Common myeloid progenitor, CD34-positive (primary cell): ENCODE measurements at regions of chr1 and their contacts with region 1.

Region 1: GRCh38 chr1:40078512-40079333 is 18.3 kb downstream of the PPT1 start:
- DNase-seq: peak; percentile 51 to 68 (median 61)
- H3K4me3 ChIP-seq: no peak overlapping the region
- H3K27ac ChIP-seq: no peak overlapping the region
- H3K4me1 ChIP-seq: peaks cover 0 to 15% (median 7%) of the 10 kb centered on the region in 4 experiments
- H3K27me3 ChIP-seq: no peaks in the 10 kb centered on the region

Region 2: GRCh38 chr1:39954816-39955546 is 123.7 kb before region 1 on chr1 and contains the start of gene MFSD2A:
- CTCF ChIA-PET with region 1: no interaction called
- POLR2A ChIA-PET with region 1: no interaction called
- DNase-seq: peak; percentile 81 to 90 (median 89)
- H3K4me3 ChIP-seq: peak within 1 kb of the TSS; percentile 29 to 79 (median 62)
- H3K27ac ChIP-seq: no peak within 1 kb of the TSS
- H3K4me1 ChIP-seq: peaks cover 2 to 43% (median 23%) of the 10 kb centered on the region in 4 experiments
- H3K27me3 ChIP-seq: peaks cover 0 to 5% (median 0%) of the 10 kb centered on the region in 5 experiments

Region 3: GRCh38 chr1:40094466-40095110 is 15.9 kb after region 1 on chr1:
- CTCF ChIA-PET with region 1: interaction called, 14 read pairs
- POLR2A ChIA-PET with region 1: no interaction called
- DNase-seq: no peak
- H3K4me3 ChIP-seq: no peak overlapping the region
- H3K27ac ChIP-seq: no peak overlapping the region
- H3K4me1 ChIP-seq: peaks cover 5 to 39% (median 12%) of the 10 kb centered on the region in 4 experiments
- H3K27me3 ChIP-seq: no peaks in the 10 kb centered on the region

Region 4: DNA sequence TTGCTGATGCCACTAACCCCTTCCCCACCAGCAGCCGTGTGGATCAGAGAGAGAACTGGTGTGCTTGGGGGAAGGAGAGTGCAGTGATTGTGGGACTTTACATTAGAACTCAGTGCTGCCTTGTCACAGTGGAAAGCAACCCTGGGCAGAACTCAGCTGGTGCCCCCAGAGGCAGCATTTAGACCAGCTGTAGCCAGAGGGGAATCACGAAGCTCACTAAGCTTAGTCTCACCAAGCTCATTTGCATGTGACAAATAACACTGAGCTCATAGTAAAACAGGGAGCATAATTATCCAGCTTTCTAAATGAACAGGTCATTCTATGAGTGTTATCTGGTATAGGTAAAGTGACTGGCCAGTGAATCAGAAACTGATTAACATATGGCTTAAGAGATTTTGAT is 285.0 kb after region 1 on chr1:
- CTCF ChIA-PET with region 1: no interaction called
- POLR2A ChIA-PET with region 1: no interaction called
- DNase-seq: peak in 2 of 3 donors; percentile 52 to 62
- H3K4me3 ChIP-seq: no peak overlapping the region
- H3K27ac ChIP-seq: no peak overlapping the region
- H3K4me1 ChIP-seq: peaks cover 0 to 6% (median 0%) of the 10 kb centered on the region in 4 experiments
- H3K27me3 ChIP-seq: no peaks in the 10 kb centered on the region